AG04450 (cell line): ENCODE measurements at regions of chr20 and their contacts with region 1.

Region 1: GRCh38 chr20:23350196-23350903 is at the start of gene NXT1:
- DNase-seq: peak; percentile 97
- H3K4me3 ChIP-seq: peak within 1 kb of the TSS; percentile 90
- H3K27ac ChIP-seq: peak within 1 kb of the TSS; percentile 99
- H3K27me3 ChIP-seq: no peaks in the 10 kb centered on the region
- CTCF ChIP-seq: no peak
- polyA plus RNA-seq, gene NXT1: 17.9 and 19.5 TPM in 2 replicates

Region 2: DNA sequence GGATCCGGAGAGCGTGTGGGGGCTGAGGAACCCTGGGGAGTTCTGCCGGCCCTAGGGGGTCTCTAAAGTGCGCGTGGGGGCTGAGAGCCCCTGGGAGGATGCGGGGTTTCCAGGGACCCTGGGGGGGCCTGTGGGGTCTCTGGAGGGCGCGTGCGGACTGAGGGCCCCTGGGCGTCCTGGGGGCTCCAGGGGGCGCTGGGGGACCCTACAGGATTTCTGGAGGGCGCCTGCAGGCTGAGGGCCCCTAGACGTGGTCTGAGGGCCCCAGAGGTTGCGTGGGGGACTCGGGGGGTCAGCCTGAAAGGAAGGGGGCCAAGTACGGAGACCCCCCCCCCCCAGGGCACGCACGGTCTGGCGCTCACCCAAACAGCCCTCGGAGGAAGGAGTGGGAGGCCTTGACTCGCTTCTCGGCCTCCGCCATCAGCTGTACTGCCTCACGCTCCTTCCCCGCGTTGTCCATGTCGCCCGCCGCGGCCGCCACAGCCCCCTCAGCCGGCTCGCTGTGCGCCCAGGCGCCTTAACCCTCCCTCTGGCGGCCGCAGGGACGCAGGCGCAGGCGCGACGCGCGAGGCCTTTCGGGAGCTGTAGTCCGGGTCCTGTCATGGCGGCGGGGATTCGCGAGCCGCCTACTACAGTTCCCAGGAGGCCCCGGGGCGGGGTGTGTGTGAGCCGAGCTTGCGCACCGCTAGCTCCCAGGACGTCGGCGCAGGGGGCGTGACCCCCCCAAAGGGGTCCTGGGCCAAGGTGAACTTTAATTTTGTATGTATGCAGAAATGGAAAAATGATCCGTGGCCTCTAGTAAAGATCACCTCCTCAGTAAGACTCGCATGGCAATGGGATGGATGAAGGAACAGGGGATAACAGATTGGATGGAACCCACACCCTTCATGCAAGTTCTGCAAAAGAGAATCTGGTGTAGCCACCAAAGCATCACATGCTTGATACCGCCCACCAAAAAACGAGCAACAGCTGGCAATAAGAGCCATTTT is 70.9 kb after region 1 on chr20 and contains the start of gene NAPB:
- CTCF ChIA-PET with region 1: interaction called, 12 read pairs
- POLR2A ChIA-PET with region 1: interaction called, 7 read pairs
- DNase-seq: peak; percentile 69
- H3K4me3 ChIP-seq: peak within 1 kb of the TSS; percentile 92
- H3K27ac ChIP-seq: peak within 1 kb of the TSS; percentile 80
- H3K27me3 ChIP-seq: peaks cover 2% of the 10 kb centered on the region
- CTCF ChIP-seq: peak; percentile 49
- polyA plus RNA-seq, gene NAPB: 4.8 and 6.4 TPM in 2 replicates

Region 3: DNA sequence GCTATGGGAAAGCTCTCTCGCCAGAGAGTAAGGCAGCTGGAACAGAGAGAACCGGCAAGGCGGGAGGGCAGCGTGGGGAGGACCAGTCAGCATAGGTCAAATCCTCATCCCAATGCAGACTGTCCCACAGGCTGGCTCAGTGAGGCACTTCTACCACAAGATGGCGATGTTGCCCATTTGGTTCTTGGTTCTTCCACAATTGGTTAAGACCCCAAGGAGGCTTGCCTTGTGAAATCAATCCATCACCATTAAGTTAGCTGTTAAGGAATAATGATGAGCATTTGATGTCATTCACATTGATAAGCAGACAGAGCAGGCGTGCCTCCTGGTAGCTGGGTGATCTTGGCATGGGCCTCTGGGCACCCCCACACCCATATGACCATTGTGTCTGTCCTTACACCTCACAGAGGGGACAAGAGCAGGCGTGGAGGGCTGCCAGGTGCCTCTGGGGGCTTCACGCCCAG is 91.5 kb after region 1 on chr20:
- CTCF ChIA-PET with region 1: interaction called, 25 read pairs
- POLR2A ChIA-PET with region 1: no interaction called
- DNase-seq: peak; percentile 45
- H3K4me3 ChIP-seq: no peak overlapping the region
- H3K27ac ChIP-seq: no peak overlapping the region
- H3K27me3 ChIP-seq: peaks cover 3% of the 10 kb centered on the region
- CTCF ChIP-seq: peak; percentile 88